ENCODE measurements at regions of chr9 and their contacts with region 1.

Region 1: GRCh38 chr9:130107234-130107861 is 53.6 kb downstream of the GPR107 start:
- DNase-seq: peak; percentile 92
- ATAC-seq: peak; percentile 89
- H3K4me3 Mint-ChIP-seq: peak overlapping the region; percentile 28
- H3K27ac Mint-ChIP-seq: peak overlapping the region; percentile 85
- H3K4me1 Mint-ChIP-seq: peaks cover 43% of the 10 kb centered on the region
- H3K27me3 Mint-ChIP-seq: no peaks in the 10 kb centered on the region

Region 2: DNA sequence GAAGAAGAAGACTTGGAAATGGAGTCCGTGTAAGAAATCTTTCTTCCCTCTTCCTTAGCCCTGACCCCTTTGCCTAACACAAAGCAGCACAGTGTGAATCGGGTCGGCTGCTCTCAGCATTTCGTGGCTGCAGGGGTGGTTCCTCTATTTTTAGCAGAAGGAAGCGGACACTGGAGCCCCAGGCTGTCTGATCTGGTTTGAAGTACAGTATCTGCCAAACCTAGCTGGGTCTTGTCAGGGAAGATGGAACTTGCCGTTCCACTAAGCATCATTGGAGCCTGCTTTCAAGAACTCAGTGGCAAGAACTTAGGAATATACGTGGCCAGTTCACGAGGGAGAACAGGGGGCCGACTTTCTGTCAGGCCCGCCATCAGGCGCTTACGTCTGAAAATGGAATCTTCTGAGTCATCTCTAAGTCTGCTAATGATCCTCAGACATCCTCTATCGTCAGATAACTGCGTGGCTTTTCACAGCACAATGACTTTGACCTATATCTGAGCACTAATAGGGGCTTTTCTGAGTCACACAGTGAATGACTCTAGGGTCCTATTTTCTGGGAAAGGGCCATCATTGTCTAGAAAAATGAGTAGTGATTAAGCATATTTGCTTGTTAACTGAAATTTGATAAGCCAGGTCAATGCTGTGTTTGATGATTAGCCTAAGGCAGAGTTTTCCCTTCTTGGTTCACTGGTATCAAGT is 21.5 kb after region 1 on chr9:
- CTCF ChIA-PET with region 1: interaction called, 15 read pairs
- POLR2A ChIA-PET with region 1: interaction called, 4 read pairs
- intact Hi-C with region 1: loop called (anchors 1 kb)
- DNase-seq: peak; percentile 70
- ATAC-seq: peak; percentile 82
- H3K4me3 Mint-ChIP-seq: peak overlapping the region; percentile 75
- H3K27ac Mint-ChIP-seq: peak overlapping the region; percentile 100
- H3K4me1 Mint-ChIP-seq: peaks cover 54% of the 10 kb centered on the region
- H3K27me3 Mint-ChIP-seq: no peaks in the 10 kb centered on the region

Region 3: GRCh38 chr9:130235897-130236668 is 128.7 kb after region 1 on chr9:
- CTCF ChIA-PET with region 1: interaction called, 59 read pairs
- POLR2A ChIA-PET with region 1: no interaction called
- intact Hi-C with region 1: loop called (anchors 1 kb)
- DNase-seq: peak; percentile 79
- ATAC-seq: no peak
- H3K4me3 Mint-ChIP-seq: no peak overlapping the region
- H3K27ac Mint-ChIP-seq: peak overlapping the region; percentile 47
- H3K4me1 Mint-ChIP-seq: peaks cover 30% of the 10 kb centered on the region
- H3K27me3 Mint-ChIP-seq: no peaks in the 10 kb centered on the region

Region 4: GRCh38 chr9:130343445-130343918 is 236.1 kb after region 1 on chr9:
- CTCF ChIA-PET with region 1: interaction called, 4 read pairs
- POLR2A ChIA-PET with region 1: no interaction called
- intact Hi-C with region 1: loop called (anchors 1 kb)
- DNase-seq: peak; percentile 66
- ATAC-seq: peak; percentile 40
- H3K4me3 Mint-ChIP-seq: no peak overlapping the region
- H3K27ac Mint-ChIP-seq: no peak overlapping the region
- H3K4me1 Mint-ChIP-seq: no peaks in the 10 kb centered on the region
- H3K27me3 Mint-ChIP-seq: no peaks in the 10 kb centered on the region

Region 5: DNA sequence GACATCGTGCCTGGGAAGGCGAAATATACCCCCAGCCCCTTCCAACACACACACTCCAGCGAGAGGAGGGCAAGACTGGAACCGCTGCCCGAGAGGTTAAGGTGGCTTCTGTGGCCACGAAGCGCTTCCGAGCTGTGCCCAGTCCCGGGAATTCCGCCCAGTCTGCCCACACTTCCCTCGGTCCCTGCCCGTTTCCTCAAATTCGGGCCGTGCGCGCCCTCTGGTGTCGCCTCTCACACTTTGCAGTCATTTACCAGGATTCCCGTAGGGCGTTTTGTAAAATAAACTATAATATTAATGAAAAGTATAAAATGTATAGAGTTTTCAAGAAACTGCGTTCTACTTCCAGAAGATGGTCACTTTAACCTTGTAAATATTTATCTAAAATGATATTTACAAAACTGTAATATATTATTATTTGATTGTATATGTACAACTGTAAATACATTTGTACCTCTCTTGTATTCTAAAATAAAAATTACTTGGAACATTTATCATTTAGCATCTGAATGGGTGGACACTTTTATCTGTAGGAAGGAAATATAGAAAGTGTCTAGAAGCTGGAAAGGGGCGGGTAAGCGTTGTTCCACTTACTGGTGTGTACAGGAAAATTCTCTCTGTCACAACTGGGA is 575.3 kb after region 1 on chr9:
- CTCF ChIA-PET with region 1: interaction called, 3 read pairs
- POLR2A ChIA-PET with region 1: no interaction called
- intact Hi-C with region 1: loop called in 1 of 2 experiments (anchors 5 kb)
- DNase-seq: peak; percentile 78
- ATAC-seq: peak; percentile 30
- H3K4me3 Mint-ChIP-seq: peak overlapping the region; percentile 81
- H3K27ac Mint-ChIP-seq: peak overlapping the region; percentile 77
- H3K4me1 Mint-ChIP-seq: peaks cover 5% of the 10 kb centered on the region
- H3K27me3 Mint-ChIP-seq: peaks cover 4% of the 10 kb centered on the region